HepG2 (cell line): ENCODE measurements at regions of chr9 and their contacts with region 1.

Region 1: GRCh38 chr9:101063192-101063591 is 34.7 kb downstream of the PLPPR1 start:
- DNase-seq: no peak
- ATAC-seq: peak; percentile 57
- H3K4me3 ChIP-seq: no peak overlapping the region; a peak in 1 of 6 replicates
- H3K27ac ChIP-seq: peak overlapping the region; percentile 64
- H3K4me1 ChIP-seq: peaks cover 42% of the 10 kb centered on the region
- H3K27me3 ChIP-seq: no peaks in the 10 kb centered on the region
- CTCF ChIP-seq: no peak
- EP300 ChIP-seq: no peak
- POLR2A ChIP-seq: no peak
- RAD21 ChIP-seq: no peak

Region 2: DNA sequence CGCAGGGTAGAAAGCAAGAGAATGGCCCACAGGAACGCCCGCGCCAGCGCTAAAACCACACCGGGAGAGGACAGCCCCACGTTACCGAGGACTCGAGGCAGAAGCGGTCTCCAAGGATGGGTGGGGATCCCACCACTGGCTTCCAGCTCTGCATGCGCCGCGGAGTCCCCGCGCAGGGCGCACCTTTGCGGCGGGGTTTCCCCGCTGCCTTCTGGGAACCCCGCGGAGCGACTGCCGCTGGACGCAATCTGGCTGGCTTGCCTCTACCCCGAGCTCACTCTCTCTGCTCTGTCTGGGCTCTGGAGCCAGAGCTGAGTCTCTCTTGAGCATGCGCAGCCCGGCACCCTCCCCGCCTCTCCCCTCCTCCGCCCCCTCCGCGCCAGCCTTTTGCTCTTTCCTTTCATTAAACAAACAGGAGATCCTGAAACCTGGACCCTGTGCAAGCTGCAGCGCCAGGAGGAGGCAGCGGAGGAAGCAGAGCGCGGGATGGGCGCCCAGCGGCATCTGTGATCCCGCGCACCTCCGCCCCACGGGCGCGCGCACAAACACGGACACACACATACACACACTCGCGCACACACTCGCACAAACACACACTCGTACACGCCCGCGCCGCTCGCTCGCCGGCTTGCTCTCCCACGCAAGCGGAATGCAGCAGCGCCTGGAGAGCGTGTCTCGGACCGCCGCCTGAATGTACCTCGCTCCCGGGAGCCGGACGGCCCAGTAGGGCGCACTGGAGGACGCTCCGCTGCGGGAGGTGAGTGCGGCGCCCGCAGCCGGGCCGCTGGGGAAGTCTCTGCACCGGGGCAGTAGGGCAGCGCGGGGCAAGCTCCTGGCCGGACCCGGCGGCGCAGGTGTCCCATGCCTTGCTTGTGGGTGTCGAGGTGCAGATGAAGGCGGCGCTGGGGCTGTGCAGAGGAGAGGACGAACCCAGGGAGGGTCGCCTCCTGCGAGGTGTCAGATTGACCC is 34.6 kb before region 1 on chr9 and contains the start of gene PLPPR1:
- CTCF ChIA-PET with region 1: no interaction called
- POLR2A ChIA-PET with region 1: interaction called, 19 read pairs
- in situ Hi-C with region 1: no loop called
- intact Hi-C with region 1: loop called (anchors 1 kb)
- DNase-seq: peak; percentile 89
- ATAC-seq: peak; percentile 91
- H3K4me3 ChIP-seq: peak within 1 kb of the TSS; percentile 89 to 92 (median 91)
- H3K27ac ChIP-seq: peak within 1 kb of the TSS; percentile 77
- H3K4me1 ChIP-seq: peaks cover 38% of the 10 kb centered on the region
- H3K27me3 ChIP-seq: peaks cover 3 to 8% of the 10 kb centered on the region in 2 experiments; a peak in 3 of 5 replicates
- CTCF ChIP-seq: peak; percentile 54
- EP300 ChIP-seq: peak in 1 of 2 experiments; percentile 38; a peak in 1 of 4 replicates
- POLR2A ChIP-seq: peak; percentile 76 to 89
- RAD21 ChIP-seq: peak; percentile 20; the same call in 1 of the 2 replicates
- total RNA-seq, gene PLPPR1: 16.0 and 16.4 TPM in 2 replicates

Region 3: GRCh38 chr9:101093620-101094019 is 30.4 kb after region 1 on chr9:
- CTCF ChIA-PET with region 1: no interaction called
- POLR2A ChIA-PET with region 1: no interaction called
- in situ Hi-C with region 1: no loop called
- intact Hi-C with region 1: no loop called
- DNase-seq: peak; percentile 16
- ATAC-seq: no peak
- H3K4me3 ChIP-seq: no peak overlapping the region
- H3K27ac ChIP-seq: no peak overlapping the region
- H3K4me1 ChIP-seq: no peaks in the 10 kb centered on the region
- H3K27me3 ChIP-seq: no peaks in the 10 kb centered on the region
- CTCF ChIP-seq: no peak
- EP300 ChIP-seq: no peak
- POLR2A ChIP-seq: no peak
- RAD21 ChIP-seq: no peak